Ascending aorta (tissue), 2 donors: ENCODE measurements at regions of chr9 and their contacts with region 1.

Region 1: DNA sequence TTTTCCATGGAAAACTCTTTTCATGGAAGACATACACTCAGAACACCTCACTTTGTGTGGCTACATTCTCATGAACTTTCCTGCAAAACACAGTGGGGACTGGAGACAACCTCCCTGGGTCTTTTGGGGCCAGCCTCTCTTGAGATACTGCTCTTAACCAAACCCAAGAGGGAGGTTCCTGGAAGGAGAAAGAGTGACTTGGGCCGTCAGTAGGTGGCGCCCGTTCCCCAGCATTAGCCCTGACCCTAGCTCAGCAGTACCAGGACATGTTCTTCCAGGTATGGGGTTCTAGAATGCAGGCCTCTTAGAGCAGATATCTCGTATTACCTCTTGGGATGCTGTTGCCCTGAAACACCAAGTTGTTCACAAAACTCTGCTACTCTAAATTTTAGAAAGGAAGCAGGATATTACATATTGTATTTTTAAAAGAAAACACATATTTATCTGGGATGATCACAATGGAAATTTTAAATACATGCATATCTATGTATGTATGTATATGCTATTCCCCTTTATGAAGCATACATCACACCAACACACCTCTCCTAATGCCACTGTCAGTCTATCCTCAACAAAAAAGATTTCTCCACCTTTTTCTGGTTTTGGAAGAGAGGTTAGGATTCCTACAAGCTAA is 15.8 kb upstream of the GLIS3 start:
- DNase-seq: peak in 1 of 2 donors; percentile 84
- H3K4me3 ChIP-seq: no peak overlapping the region
- H3K27ac ChIP-seq: no peak overlapping the region
- H3K4me1 ChIP-seq: peaks cover 0 to 2% of the 10 kb centered on the region in 2 donors
- H3K27me3 ChIP-seq: no peaks in the 10 kb centered on the region
- CTCF ChIP-seq: peak; percentile 66 to 88 (median 84)

Region 2: DNA sequence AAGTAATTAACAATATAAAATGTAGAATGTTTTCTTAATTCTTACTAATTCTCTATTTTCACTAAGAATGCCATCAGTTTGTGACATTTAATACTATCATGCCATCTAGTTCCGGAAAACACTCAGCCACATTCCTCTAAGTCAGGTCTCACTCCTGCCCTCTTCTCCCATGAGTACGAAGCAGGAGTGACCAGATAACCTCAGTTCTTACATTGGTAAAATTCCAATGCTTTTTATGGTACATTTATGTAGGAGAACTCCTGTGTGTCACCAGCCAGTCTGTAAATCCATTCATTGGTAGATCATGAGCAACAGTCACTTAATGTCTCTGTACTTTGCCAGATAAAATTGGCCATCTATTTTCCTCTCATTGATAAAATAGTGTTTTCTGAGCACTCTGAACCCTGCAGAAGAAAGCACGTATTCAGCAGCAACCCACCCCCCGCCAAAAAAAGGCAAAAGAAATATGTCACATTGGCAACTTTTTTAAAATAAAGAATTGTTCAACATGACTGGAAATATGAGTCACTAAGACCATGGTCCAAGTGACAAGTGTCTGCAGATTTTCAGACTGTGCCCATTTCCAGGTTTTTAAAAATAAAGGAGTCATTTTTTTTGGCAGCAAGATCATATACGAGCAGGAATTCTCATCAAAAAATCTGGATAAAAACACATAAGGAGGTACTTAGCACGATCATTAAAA is 27.7 kb before region 1 on chr9:
- intact Hi-C with region 1: no loop called
- DNase-seq: no peak
- H3K4me3 ChIP-seq: no peak overlapping the region
- H3K27ac ChIP-seq: no peak overlapping the region
- H3K4me1 ChIP-seq: peaks cover 5 to 19% of the 10 kb centered on the region in 2 donors
- H3K27me3 ChIP-seq: no peaks in the 10 kb centered on the region
- CTCF ChIP-seq: no peak

Region 3: DNA sequence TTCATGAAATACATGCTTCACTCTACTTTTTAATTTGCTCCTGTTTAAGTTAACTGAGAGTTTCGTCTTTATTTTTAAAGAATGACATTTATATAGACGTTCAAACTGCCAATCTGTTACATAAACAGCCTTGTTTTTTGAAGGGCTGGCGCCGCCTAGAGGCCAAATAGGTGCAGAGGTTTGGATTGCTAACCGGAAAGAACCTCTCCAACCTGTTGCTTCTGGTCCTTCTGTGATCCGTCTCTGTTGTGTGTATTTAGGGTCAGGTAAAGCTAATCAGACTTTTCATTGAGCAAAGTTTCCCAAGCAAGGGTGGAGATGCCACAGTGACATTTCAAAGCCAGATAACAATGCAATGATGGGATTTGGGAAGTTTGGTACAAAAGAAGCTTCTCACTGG is 23.7 kb after region 1 on chr9:
- intact Hi-C with region 1: loop called (anchors 1 kb)
- DNase-seq: peak; percentile 18 to 91
- H3K4me3 ChIP-seq: no peak overlapping the region
- H3K27ac ChIP-seq: no peak overlapping the region
- H3K4me1 ChIP-seq: no peaks in the 10 kb centered on the region
- H3K27me3 ChIP-seq: no peaks in the 10 kb centered on the region
- CTCF ChIP-seq: peak; percentile 74 to 87 (median 86)

Region 4: GRCh38 chr9:4366591-4367330 is 51.1 kb after region 1 on chr9:
- intact Hi-C with region 1: loop called (anchors 1 kb)
- DNase-seq: no peak
- H3K4me3 ChIP-seq: no peak overlapping the region
- H3K27ac ChIP-seq: no peak overlapping the region
- H3K4me1 ChIP-seq: no peaks in the 10 kb centered on the region
- H3K27me3 ChIP-seq: no peaks in the 10 kb centered on the region
- CTCF ChIP-seq: peak in 2 of 3 experiments; percentile 34 to 50

Region 5: GRCh38 chr9:4386819-4387218 is 71.1 kb after region 1 on chr9:
- intact Hi-C with region 1: no loop called
- DNase-seq: no peak
- H3K4me3 ChIP-seq: no peak overlapping the region
- H3K27ac ChIP-seq: no peak overlapping the region
- H3K4me1 ChIP-seq: no peaks in the 10 kb centered on the region
- H3K27me3 ChIP-seq: no peaks in the 10 kb centered on the region
- CTCF ChIP-seq: no peak

Region 6: GRCh38 chr9:4489919-4490704 is 174.4 kb after region 1 on chr9 and contains the start of gene SLC1A1:
- intact Hi-C with region 1: loop called (anchors 10 kb)
- DNase-seq: peak; percentile 15 to 85
- H3K4me3 ChIP-seq: peak within 1 kb of the TSS; percentile 67 to 87
- H3K27ac ChIP-seq: peak within 1 kb of the TSS; percentile 81 to 84
- H3K4me1 ChIP-seq: peaks cover 0 to 6% of the 10 kb centered on the region in 2 donors
- H3K27me3 ChIP-seq: no peaks in the 10 kb centered on the region
- CTCF ChIP-seq: no peak
- total RNA-seq, gene SLC1A1: 6.5 TPM